Tibial artery (tissue), 4 donors: ENCODE measurements at regions of chr12 and their contacts with region 1.

Region 1: DNA sequence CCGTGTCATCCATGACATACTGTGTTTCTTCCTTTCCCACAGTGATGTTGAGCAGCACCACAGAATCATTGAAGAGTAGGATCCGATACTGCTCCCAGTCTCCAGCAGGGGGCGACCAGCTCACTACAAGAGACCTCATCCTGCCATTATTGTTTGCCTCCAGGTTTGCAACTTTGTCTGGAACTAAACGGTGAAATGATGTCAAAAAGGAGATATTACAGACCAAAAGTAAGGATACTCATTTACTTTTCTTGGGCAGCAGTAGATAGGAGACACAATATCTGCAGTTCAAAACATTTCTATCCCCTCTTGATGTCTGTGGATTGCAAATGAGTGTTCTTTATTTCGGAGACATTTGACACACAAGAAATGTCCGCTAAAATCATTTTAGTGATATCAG is 47.2 kb downstream of the PTPRB start:
- DNase-seq: peak; percentile 77 to 81
- H3K4me3 ChIP-seq: no peak overlapping the region
- H3K27ac ChIP-seq: no peak overlapping the region
- H3K4me1 ChIP-seq: no peaks in the 10 kb centered on the region
- H3K27me3 ChIP-seq: no peaks in the 10 kb centered on the region
- CTCF ChIP-seq: peak; percentile 74 to 78

Region 2: DNA sequence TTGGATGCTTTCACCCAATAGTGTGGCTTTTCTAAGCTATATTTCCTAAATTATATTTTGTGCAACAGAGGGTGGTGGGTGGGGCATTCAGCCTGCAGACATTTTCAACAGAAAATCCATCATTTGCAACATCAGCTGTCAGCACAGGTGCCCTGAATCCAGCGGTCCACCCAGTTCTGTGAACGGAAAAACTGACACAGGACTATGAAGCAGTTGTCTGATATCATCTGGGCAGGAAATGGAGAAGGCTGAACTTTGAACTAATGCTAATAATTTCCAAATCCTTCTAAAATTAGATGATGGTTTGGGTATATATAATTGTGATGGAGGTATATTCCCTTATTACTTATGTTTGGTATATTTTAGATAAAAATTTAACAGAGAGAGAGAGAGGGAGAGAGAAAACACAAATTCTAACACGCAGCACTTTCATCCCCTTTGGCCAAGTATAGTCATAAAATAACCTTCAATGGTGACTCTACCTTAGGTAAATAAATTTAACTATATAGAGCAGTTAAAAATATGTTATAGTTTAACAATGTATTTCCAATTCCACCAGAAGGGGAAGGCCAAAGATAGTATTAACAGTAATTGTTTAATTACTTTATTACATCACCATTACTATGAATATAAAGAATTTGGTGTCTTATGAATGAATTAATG is 105.4 kb after region 1 on chr12:
- intact Hi-C with region 1: no loop called
- DNase-seq: no peak
- H3K4me3 ChIP-seq: no peak overlapping the region
- H3K27ac ChIP-seq: no peak overlapping the region
- H3K4me1 ChIP-seq: no peaks in the 10 kb centered on the region
- H3K27me3 ChIP-seq: no peaks in the 10 kb centered on the region
- CTCF ChIP-seq: no peak

Region 3: GRCh38 chr12:70719672-70720420 is 129.8 kb after region 1 on chr12:
- intact Hi-C with region 1: loop called (anchors 5 kb)
- DNase-seq: peak in 1 of 2 donors; percentile 32
- H3K4me3 ChIP-seq: peak overlapping the region; percentile 1 to 10
- H3K27ac ChIP-seq: no peak overlapping the region
- H3K4me1 ChIP-seq: no peaks in the 10 kb centered on the region
- H3K27me3 ChIP-seq: no peaks in the 10 kb centered on the region
- CTCF ChIP-seq: peak; percentile 74 to 79